ENCODE measurements at regions of chr12 and their contacts with region 1.

Region 1: DNA sequence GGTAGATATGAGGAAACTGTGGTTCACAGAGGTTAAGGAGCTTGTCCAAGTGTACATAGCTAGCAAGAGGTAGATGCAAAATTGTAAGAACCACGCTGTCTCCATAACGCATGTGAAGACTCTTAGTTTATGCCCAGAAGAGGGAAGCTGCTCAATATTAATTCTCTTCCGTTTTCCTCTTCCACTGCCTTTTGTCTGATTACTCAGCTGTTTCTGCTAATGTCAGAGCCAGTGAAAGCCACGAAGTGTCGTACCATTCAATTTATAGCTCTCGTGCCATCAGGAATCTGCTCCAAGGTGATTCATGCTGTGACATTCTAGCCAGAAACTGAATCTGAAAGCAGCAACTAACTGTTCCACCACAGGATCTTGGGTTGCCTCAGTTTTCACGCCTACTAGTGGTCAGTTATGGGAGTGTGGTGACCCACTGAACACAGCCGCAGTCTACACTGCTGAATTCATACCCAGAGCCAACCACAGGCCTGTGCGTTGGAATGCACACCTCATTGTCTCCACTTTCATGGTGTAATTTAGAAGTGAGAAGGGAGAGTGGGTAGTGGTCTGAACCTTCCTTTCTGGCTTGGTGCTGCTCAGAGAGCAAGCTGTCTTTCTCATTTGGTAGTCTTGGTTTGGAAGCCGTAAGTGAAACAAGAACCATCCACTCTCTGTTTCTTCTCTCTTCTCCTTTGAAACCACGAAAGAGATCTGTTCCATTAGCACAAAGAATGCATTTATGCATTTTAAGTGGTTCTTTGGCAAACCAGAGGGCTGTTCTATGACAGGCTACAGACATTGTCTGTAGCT is 74.2 kb upstream of the NAP1L1 start:
- DNase-seq: peak; percentile 82
- ATAC-seq: peak; percentile 99
- H3K4me3 ChIP-seq: peak overlapping the region; percentile 5 to 68 (median 45)
- H3K4me3 Mint-ChIP-seq: peak overlapping the region; percentile 91
- H3K27ac ChIP-seq: peak overlapping the region; percentile 14 to 76
- H3K27ac Mint-ChIP-seq: peak overlapping the region; percentile 94
- H3K4me1 ChIP-seq: peaks cover 9 to 16% of the 10 kb centered on the region in 2 donors
- H3K4me1 Mint-ChIP-seq: peaks cover 25% of the 10 kb centered on the region
- H3K27me3 ChIP-seq: no peaks in the 10 kb centered on the region
- H3K27me3 Mint-ChIP-seq: no peaks in the 10 kb centered on the region
- CTCF ChIP-seq: peak; percentile 83

Region 2: GRCh38 chr12:76173756-76174155 is 15.0 kb after region 1 on chr12:
- CTCF ChIA-PET with region 1: interaction called, 12 read pairs
- POLR2A ChIA-PET with region 1: no interaction called
- intact Hi-C with region 1: loop called (anchors 2 kb)
- DNase-seq: no peak
- ATAC-seq: no peak
- H3K4me3 ChIP-seq: no peak overlapping the region
- H3K4me3 Mint-ChIP-seq: no peak overlapping the region
- H3K27ac ChIP-seq: no peak overlapping the region
- H3K27ac Mint-ChIP-seq: peak overlapping the region; percentile 63
- H3K4me1 ChIP-seq: peaks cover 21 to 28% of the 10 kb centered on the region in 2 donors
- H3K4me1 Mint-ChIP-seq: peaks cover 29% of the 10 kb centered on the region
- H3K27me3 ChIP-seq: no peaks in the 10 kb centered on the region
- H3K27me3 Mint-ChIP-seq: no peaks in the 10 kb centered on the region
- CTCF ChIP-seq: no peak

Region 3: DNA sequence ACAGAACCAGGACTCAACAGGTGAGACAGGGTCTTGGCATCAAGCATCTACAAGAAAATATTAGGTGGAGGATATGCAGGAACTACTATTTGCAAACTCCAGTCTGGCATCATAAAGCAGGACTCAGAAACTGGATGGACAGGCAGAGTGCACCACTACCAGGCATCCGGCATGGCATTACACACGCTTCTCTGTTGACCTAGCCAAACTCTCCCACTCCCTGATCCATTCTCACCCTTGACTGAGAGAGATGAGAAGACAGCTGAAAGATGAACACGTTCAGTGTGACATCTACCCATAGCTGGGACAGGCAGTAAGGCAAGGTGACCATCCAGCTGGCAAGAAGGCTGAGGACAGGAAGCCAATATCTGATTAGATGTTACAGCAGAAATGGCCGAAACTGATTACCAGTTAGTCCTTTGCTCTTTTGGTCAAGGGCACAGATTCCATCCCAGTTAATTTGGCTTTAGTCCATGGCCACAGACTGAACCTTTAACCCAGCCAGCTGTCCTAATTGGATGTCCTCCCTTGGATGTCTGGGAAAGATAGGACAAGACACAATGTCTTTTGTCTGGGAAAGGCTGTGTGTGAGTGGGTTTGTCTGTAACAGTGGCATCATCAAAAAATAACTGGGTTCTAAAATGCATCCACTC is 117.9 kb after region 1 on chr12:
- CTCF ChIA-PET with region 1: no interaction called
- POLR2A ChIA-PET with region 1: no interaction called
- intact Hi-C with region 1: no loop called
- DNase-seq: no peak
- ATAC-seq: no peak
- H3K4me3 ChIP-seq: no peak overlapping the region
- H3K4me3 Mint-ChIP-seq: no peak overlapping the region
- H3K27ac ChIP-seq: no peak overlapping the region
- H3K27ac Mint-ChIP-seq: no peak overlapping the region
- H3K4me1 ChIP-seq: no peaks in the 10 kb centered on the region
- H3K4me1 Mint-ChIP-seq: no peaks in the 10 kb centered on the region
- H3K27me3 ChIP-seq: peaks cover 0 to 4% (median 0%) of the 10 kb centered on the region in 4 experiments
- H3K27me3 Mint-ChIP-seq: peaks cover 17% of the 10 kb centered on the region
- CTCF ChIP-seq: no peak

Region 4: DNA sequence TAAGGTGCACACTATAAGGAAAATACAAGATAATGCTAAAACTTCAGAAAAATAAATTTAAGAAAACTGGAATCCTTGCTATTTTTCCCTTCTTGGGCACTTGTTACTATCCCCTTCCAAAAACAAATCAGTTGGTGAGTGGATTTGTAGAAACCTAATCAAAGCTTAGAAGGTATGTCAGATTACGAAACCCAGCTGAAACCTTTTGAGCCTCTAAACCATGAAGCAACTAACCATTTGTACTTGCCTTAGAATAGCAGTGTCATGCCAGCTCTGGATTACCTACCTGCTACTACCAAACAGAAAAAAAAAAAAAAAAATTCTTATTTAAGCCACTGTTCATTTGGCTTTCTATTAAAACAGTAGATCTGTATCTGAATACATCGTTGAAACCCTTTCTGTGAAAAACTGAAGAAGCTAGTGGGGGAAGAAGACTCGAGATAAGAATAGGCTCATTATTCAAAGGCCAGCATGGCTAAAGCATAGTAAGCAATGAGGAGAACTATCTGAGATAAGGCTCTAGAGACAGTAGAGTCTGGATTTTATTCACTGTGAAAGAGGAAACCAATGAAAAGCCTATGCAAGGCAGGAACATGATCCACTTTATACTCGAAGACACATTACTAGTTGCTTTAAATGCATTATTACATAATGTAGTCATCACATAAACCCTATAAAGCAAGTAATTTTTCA is 370.7 kb after region 1 on chr12:
- CTCF ChIA-PET with region 1: no interaction called
- POLR2A ChIA-PET with region 1: no interaction called
- intact Hi-C with region 1: no loop called
- DNase-seq: no peak
- ATAC-seq: no peak
- H3K4me3 ChIP-seq: no peak overlapping the region
- H3K4me3 Mint-ChIP-seq: no peak overlapping the region
- H3K27ac ChIP-seq: no peak overlapping the region
- H3K27ac Mint-ChIP-seq: no peak overlapping the region
- H3K4me1 ChIP-seq: no peaks in the 10 kb centered on the region
- H3K4me1 Mint-ChIP-seq: peaks cover 38% of the 10 kb centered on the region
- H3K27me3 ChIP-seq: no peaks in the 10 kb centered on the region
- H3K27me3 Mint-ChIP-seq: no peaks in the 10 kb centered on the region
- CTCF ChIP-seq: no peak

Measured in B cell (primary cell).